CD8-positive, alpha-beta T cell (primary cell): ENCODE measurements at regions of chr9 and their contacts with region 1.

Region 1: DNA sequence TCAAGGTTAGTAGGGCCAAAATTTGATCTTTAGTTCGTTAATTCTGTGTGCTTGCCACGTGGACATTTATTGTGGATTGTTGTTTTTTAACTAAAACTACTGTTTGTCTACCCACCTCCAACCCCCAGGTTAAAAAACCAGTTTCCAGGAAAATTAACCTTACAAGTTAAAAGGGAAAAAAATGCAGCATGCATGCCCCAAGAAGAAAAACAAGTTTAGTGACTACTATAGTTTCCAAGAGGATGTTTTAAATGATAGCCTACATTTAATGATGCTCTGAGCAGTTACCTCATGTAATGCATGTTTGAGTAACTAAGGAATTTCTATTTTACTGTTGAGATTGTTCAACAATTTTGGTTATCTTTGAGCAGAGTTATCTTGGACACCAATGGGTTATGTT is 15.9 kb downstream of the SECISBP2 start:
- DNase-seq: no peak
- ATAC-seq: no peak
- H3K4me3 ChIP-seq: no peak overlapping the region
- H3K4me3 Mint-ChIP-seq: no peak overlapping the region
- H3K27ac ChIP-seq: no peak overlapping the region
- H3K27ac Mint-ChIP-seq: no peak overlapping the region
- H3K4me1 ChIP-seq: no peaks in the 10 kb centered on the region
- H3K4me1 Mint-ChIP-seq: peaks cover 13% of the 10 kb centered on the region
- H3K27me3 ChIP-seq: no peaks in the 10 kb centered on the region
- H3K27me3 Mint-ChIP-seq: no peaks in the 10 kb centered on the region
- CTCF ChIP-seq: no peak

Region 2: GRCh38 chr9:89418882-89419640 is 84.9 kb after region 1 on chr9:
- CTCF ChIA-PET with region 1: no interaction called
- POLR2A ChIA-PET with region 1: no interaction called
- intact Hi-C with region 1: loop called in 1 of 2 experiments (anchors 5 kb)
- DNase-seq: peak; percentile 45 to 85 (median 77)
- ATAC-seq: peak; percentile 65
- H3K4me3 ChIP-seq: peak overlapping the region; percentile 27 to 36
- H3K4me3 Mint-ChIP-seq: peak overlapping the region; percentile 81
- H3K27ac ChIP-seq: peak overlapping the region; percentile 52 to 76
- H3K27ac Mint-ChIP-seq: peak overlapping the region; percentile 98
- H3K4me1 ChIP-seq: peaks cover 70% of the 10 kb centered on the region
- H3K4me1 Mint-ChIP-seq: peaks cover 88% of the 10 kb centered on the region
- H3K27me3 ChIP-seq: no peaks in the 10 kb centered on the region
- H3K27me3 Mint-ChIP-seq: no peaks in the 10 kb centered on the region
- CTCF ChIP-seq: no peak